GM12878 (cell line): ENCODE measurements at regions of chr1 and their contacts with region 1.

Region 1: GRCh38 chr1:160830321-160831153 is 32.1 kb downstream of the CD244 start:
- DNase-seq: no peak
- ATAC-seq: peak; percentile 98
- H3K4me3 ChIP-seq: no peak overlapping the region
- H3K27ac ChIP-seq: no peak overlapping the region
- H3K4me1 ChIP-seq: no peaks in the 10 kb centered on the region
- H3K27me3 ChIP-seq: no peaks in the 10 kb centered on the region
- CTCF ChIP-seq: peak; percentile 67 to 87 (median 76)
- EP300 ChIP-seq: no peak
- POLR2A ChIP-seq: no peak
- RAD21 ChIP-seq: peak; percentile 84

Region 2: GRCh38 chr1:160666079-160666442 is 164.5 kb before region 1 on chr1:
- CTCF ChIA-PET with region 1: no interaction called
- POLR2A ChIA-PET with region 1: no interaction called
- RAD21 ChIA-PET with region 1: no interaction called
- SMC1A ChIA-PET with region 1: no interaction called
- in situ Hi-C with region 1: no loop called
- intact Hi-C with region 1: no loop called
- DNase-seq: no peak
- ATAC-seq: no peak
- H3K4me3 ChIP-seq: peak overlapping the region; percentile 29; the same call in 1 of the 2 replicates
- H3K27ac ChIP-seq: peak overlapping the region; percentile 75
- H3K4me1 ChIP-seq: peaks cover 34% of the 10 kb centered on the region
- H3K27me3 ChIP-seq: no peaks in the 10 kb centered on the region
- CTCF ChIP-seq: no peak
- EP300 ChIP-seq: no peak
- POLR2A ChIP-seq: no peak
- RAD21 ChIP-seq: no peak

Region 3: DNA sequence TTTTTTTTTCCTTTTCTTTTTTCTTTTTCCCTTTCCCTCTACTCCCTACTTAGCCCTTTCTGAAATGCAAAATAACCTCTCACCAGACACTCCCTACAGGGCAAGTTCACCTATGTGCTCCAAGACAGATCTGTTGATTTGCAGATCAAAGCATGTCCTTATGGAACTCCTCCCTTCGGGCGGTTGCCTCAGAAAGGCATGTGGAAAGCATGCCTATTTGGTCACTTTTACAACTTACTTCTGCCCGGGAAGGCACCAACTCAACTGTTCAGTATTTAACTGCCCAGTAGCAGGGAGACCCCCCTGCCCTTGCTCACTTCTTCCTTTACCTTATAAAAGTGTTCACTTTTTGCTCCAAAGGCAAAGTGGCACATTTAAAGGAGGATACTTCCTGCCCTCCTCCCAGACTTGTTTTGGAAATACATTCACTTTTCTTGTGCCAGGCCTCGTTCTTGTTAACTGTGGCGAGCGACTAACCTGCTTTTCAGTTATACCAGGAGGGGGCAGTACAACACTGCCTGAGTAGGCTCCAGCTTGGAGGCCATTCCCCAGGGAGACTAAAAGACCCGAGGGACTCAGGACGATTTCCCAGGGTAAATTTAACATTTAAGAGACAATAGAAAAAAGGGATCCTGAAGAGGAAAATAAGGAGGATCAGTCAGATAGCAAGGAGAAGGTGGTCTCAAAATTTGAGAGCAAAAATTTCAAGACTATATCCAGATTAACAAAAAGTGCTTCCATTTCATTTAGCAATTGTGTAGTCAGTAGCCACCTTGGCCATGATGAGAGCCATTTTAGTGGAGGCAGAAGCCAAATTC is 103.8 kb before region 1 on chr1:
- CTCF ChIA-PET with region 1: interaction called, 28 read pairs
- POLR2A ChIA-PET with region 1: interaction called, 4 read pairs
- RAD21 ChIA-PET with region 1: interaction called, 8 read pairs
- SMC1A ChIA-PET with region 1: interaction called, 30 read pairs
- in situ Hi-C with region 1: loop called (anchors 5 kb)
- intact Hi-C with region 1: loop called (anchors 1 kb)
- DNase-seq: no peak
- ATAC-seq: peak; percentile 80
- H3K4me3 ChIP-seq: no peak overlapping the region
- H3K27ac ChIP-seq: peak overlapping the region; percentile 85
- H3K4me1 ChIP-seq: peaks cover 40% of the 10 kb centered on the region
- H3K27me3 ChIP-seq: no peaks in the 10 kb centered on the region
- CTCF ChIP-seq: peak; percentile 81 to 92 (median 91); a peak in 5 of 6 replicates
- EP300 ChIP-seq: no peak
- POLR2A ChIP-seq: no peak
- RAD21 ChIP-seq: peak; percentile 99

Region 4: GRCh38 chr1:160789702-160790611 is 40.6 kb before region 1 on chr1:
- CTCF ChIA-PET with region 1: interaction called, 12 read pairs
- POLR2A ChIA-PET with region 1: no interaction called
- RAD21 ChIA-PET with region 1: interaction called, 12 read pairs
- SMC1A ChIA-PET with region 1: interaction called, 13 read pairs
- in situ Hi-C with region 1: no loop called
- intact Hi-C with region 1: no loop called
- DNase-seq: peak; percentile 89
- ATAC-seq: peak; percentile 91
- H3K4me3 ChIP-seq: no peak overlapping the region; the same call in 1 of the 2 replicates
- H3K27ac ChIP-seq: peak overlapping the region; percentile 86
- H3K4me1 ChIP-seq: peaks cover 19% of the 10 kb centered on the region
- H3K27me3 ChIP-seq: no peaks in the 10 kb centered on the region
- CTCF ChIP-seq: no peak
- EP300 ChIP-seq: peak; percentile 96 to 99
- POLR2A ChIP-seq: no peak
- RAD21 ChIP-seq: no peak

Region 5: DNA sequence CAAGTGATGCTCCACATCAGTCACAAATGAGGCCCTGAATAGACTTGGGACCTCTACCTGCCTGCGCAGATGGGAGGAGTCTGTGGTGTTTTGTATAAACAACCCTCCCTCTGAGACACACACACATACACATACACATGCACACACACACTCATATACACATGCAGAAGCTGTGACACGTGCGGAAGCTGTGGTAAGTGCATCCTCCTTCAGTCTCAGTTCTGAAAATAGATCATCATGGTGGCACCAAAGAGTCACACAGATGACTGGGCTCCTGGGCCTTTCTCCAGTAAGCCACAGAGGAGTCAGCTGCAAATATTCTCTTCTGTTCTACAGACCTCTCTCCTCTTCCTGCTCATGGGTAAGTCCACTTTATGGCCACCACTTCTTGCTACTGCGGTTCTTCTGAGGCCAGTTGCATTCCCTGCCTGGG is 34.6 kb before region 1 on chr1 and contains the start of gene LY9:
- CTCF ChIA-PET with region 1: interaction called, 30 read pairs
- POLR2A ChIA-PET with region 1: interaction called, 4 read pairs
- RAD21 ChIA-PET with region 1: interaction called, 12 read pairs
- SMC1A ChIA-PET with region 1: interaction called, 35 read pairs
- in situ Hi-C with region 1: no loop called
- intact Hi-C with region 1: loop called (anchors 1 kb)
- DNase-seq: peak; percentile 97
- ATAC-seq: peak; percentile 79
- H3K4me3 ChIP-seq: peak within 1 kb of the TSS; percentile 63
- H3K27ac ChIP-seq: peak within 1 kb of the TSS; percentile 78
- H3K4me1 ChIP-seq: peaks cover 42% of the 10 kb centered on the region
- H3K27me3 ChIP-seq: no peaks in the 10 kb centered on the region
- CTCF ChIP-seq: no peak
- EP300 ChIP-seq: peak; percentile 96 to 98
- POLR2A ChIP-seq: peak; percentile 66
- RAD21 ChIP-seq: no peak
- polyA plus RNA-seq, gene LY9: 2.7 to 2.8 TPM

Region 6: DNA sequence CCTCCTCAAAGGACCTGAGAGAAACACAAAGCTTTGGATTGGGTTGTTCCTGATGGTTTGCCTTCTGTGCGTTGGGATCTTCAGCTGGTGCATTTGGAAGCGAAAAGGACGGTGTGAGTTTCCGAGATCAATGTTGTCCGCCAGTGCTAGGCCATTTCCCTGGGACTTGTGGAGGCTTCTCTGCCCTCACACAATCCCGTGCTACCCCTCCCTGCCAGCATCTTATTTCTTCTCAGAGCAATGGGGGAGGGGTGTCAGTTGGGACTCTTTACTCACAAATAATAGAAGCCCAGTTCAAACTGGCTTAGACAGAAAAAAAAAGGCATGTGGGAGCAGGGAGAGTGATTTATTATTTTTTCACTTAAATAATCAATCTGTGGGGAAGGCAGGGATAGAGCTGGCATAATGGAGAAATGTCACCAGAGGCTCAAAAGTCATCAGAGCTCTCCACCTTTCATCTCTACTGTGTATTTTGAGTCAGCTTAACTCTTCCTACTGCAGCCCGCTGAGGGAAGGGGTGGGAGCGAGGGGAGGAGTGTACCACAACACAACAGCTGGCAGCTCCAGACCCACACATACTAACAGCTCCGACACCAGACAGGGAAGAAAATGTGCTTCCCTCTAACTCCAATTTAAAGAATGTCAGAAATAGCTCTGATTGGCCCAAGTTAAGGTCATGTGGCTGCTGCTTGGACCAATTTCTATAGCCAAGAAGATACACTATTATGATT is 12.2 kb before region 1 on chr1:
- CTCF ChIA-PET with region 1: interaction called, 20 read pairs
- POLR2A ChIA-PET with region 1: no interaction called
- RAD21 ChIA-PET with region 1: interaction called, 4 read pairs
- SMC1A ChIA-PET with region 1: interaction called, 8 read pairs
- in situ Hi-C with region 1: no loop called
- intact Hi-C with region 1: no loop called
- DNase-seq: no peak
- ATAC-seq: no peak
- H3K4me3 ChIP-seq: no peak overlapping the region
- H3K27ac ChIP-seq: no peak overlapping the region
- H3K4me1 ChIP-seq: no peaks in the 10 kb centered on the region
- H3K27me3 ChIP-seq: no peaks in the 10 kb centered on the region
- CTCF ChIP-seq: no peak
- EP300 ChIP-seq: no peak
- POLR2A ChIP-seq: no peak
- RAD21 ChIP-seq: no peak